Right lobe of liver (tissue), 6 donors: ENCODE measurements at regions of chr1 and their contacts with region 1.

Region 1: GRCh38 chr1:208245185-208245705 is 1.1 kb upstream of the PLXNA2 start:
- DNase-seq: peak; percentile 87 to 93 (median 88)
- ATAC-seq: peak; percentile 75 to 78 (median 76)
- H3K4me3 ChIP-seq: peak overlapping the region in 2 of 3 donors; percentile 83 to 88
- H3K27ac ChIP-seq: peak overlapping the region; percentile 63 to 86 (median 71)
- H3K4me1 ChIP-seq: peaks cover 0 to 23% (median 7%) of the 10 kb centered on the region in 4 donors
- H3K27me3 ChIP-seq: no peaks in the 10 kb centered on the region
- CTCF ChIP-seq: peak; percentile 82 to 91 (median 86)
- POLR2A ChIP-seq: no peak

Region 2: DNA sequence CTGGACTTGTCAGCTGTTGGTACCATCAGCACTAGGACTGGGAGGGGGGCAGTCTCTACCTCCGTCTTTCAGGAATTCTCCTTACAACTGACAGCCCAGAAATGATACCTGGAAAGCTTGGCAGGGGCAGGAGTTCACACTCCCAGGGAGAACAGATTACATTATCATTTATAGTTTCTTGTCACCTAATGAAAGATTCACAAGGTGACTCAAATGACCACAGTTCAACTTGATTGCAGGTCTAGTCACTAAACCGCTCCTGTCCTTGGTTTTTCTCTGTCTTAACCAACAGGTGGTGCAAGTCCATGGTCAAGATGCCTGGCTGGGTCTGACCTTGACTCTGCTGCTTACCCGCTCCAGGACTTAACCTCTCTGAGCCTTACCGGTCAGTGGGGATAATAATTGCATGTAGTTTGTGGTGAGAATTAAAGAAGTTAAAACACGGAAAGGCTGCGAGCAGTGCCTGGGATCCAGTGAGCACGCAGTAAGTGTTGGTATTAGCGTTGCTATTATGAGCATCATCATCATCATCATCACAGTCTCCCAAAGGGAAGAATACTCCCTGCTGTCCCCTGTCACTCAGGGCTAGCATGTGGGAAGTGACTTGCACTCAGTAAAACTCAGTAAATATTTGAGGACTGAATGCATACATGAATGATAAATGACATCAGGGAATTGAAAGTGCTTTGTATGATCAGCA is 209.0 kb before region 1 on chr1:
- intact Hi-C with region 1: loop called in 1 of 2 experiments (anchors 10 kb)
- DNase-seq: no peak
- ATAC-seq: peak; percentile 41 to 66 (median 54)
- H3K4me3 ChIP-seq: no peak overlapping the region
- H3K27ac ChIP-seq: no peak overlapping the region
- H3K4me1 ChIP-seq: no peaks in the 10 kb centered on the region
- H3K27me3 ChIP-seq: no peaks in the 10 kb centered on the region
- CTCF ChIP-seq: peak in 2 of 4 donors; percentile 35 to 40
- POLR2A ChIP-seq: no peak

Region 3: GRCh38 chr1:208127792-208128529 is 117.3 kb before region 1 on chr1:
- intact Hi-C with region 1: loop called in 1 of 2 experiments (anchors 10 kb)
- DNase-seq: no peak
- ATAC-seq: no peak
- H3K4me3 ChIP-seq: no peak overlapping the region
- H3K27ac ChIP-seq: no peak overlapping the region
- H3K4me1 ChIP-seq: no peaks in the 10 kb centered on the region
- H3K27me3 ChIP-seq: no peaks in the 10 kb centered on the region
- CTCF ChIP-seq: no peak
- POLR2A ChIP-seq: no peak